ENCODE measurements at regions of chr9 and their contacts with region 1.

Region 1: GRCh38 chr9:132099741-132100407 is 20.2 kb upstream of the MED27 start:
- DNase-seq: no peak
- ATAC-seq: no peak
- H3K4me3 ChIP-seq: no peak overlapping the region
- H3K27ac ChIP-seq: no peak overlapping the region
- H3K4me1 ChIP-seq: no peaks in the 10 kb centered on the region
- H3K27me3 ChIP-seq: peaks cover 0 to 25% of the 10 kb centered on the region in 2 donors
- CTCF ChIP-seq: no peak

Region 2: GRCh38 chr9:132169672-132170392 is 70.0 kb after region 1 on chr9:
- intact Hi-C with region 1: loop called in 1 of 2 experiments (anchors 10 kb)
- DNase-seq: peak in 3 of 4 donors; percentile 44 to 93 (median 56)
- ATAC-seq: peak; percentile 87
- H3K4me3 ChIP-seq: no peak overlapping the region
- H3K27ac ChIP-seq: no peak overlapping the region
- H3K4me1 ChIP-seq: peaks cover 0 to 3% of the 10 kb centered on the region in 2 donors
- H3K27me3 ChIP-seq: peaks cover 22 to 64% of the 10 kb centered on the region in 2 donors
- CTCF ChIP-seq: peak; percentile 79 to 95

Region 3: GRCh38 chr9:132235946-132236661 is 136.2 kb after region 1 on chr9:
- intact Hi-C with region 1: no loop called
- DNase-seq: peak; percentile 64 to 93 (median 78)
- ATAC-seq: peak; percentile 39
- H3K4me3 ChIP-seq: no peak overlapping the region
- H3K27ac ChIP-seq: no peak overlapping the region
- H3K4me1 ChIP-seq: peaks cover 0 to 33% of the 10 kb centered on the region in 2 donors
- H3K27me3 ChIP-seq: peaks cover 0 to 33% of the 10 kb centered on the region in 2 donors
- CTCF ChIP-seq: peak; percentile 94